IMR-90 (cell line): ENCODE measurements at regions of chr11 and their contacts with region 1.

Region 1: GRCh38 chr11:120511116-120511819 is at the start of gene GRIK4:
- DNase-seq: peak; percentile 57
- ATAC-seq: peak; percentile 94
- H3K4me3 ChIP-seq: peak within 1 kb of the TSS; percentile 47
- H3K27ac ChIP-seq: no peak within 1 kb of the TSS
- H3K4me1 ChIP-seq: peaks cover 2% of the 10 kb centered on the region; the same call in 1 of the 2 replicates
- H3K27me3 ChIP-seq: peaks cover 4% of the 10 kb centered on the region
- CTCF ChIP-seq: peak; percentile 97
- POLR2A ChIP-seq: no peak
- RAD21 ChIP-seq: peak; percentile 97
- total RNA-seq, gene GRIK4: under 0.01 and 0.18 TPM in 2 replicates

Region 2: GRCh38 chr11:120688163-120688562 is 176.9 kb after region 1 on chr11:
- CTCF ChIA-PET with region 1: interaction called, 22 read pairs
- POLR2A ChIA-PET with region 1: no interaction called
- dilution Hi-C with region 1: no loop called
- in situ Hi-C with region 1: loop called (anchors 5 kb)
- intact Hi-C with region 1: loop called (anchors 1 kb)
- DNase-seq: no peak
- ATAC-seq: no peak
- H3K4me3 ChIP-seq: no peak overlapping the region
- H3K27ac ChIP-seq: no peak overlapping the region
- H3K4me1 ChIP-seq: no peaks in the 10 kb centered on the region
- H3K27me3 ChIP-seq: peaks cover 36% of the 10 kb centered on the region
- CTCF ChIP-seq: no peak
- POLR2A ChIP-seq: no peak
- RAD21 ChIP-seq: no peak

Region 3: DNA sequence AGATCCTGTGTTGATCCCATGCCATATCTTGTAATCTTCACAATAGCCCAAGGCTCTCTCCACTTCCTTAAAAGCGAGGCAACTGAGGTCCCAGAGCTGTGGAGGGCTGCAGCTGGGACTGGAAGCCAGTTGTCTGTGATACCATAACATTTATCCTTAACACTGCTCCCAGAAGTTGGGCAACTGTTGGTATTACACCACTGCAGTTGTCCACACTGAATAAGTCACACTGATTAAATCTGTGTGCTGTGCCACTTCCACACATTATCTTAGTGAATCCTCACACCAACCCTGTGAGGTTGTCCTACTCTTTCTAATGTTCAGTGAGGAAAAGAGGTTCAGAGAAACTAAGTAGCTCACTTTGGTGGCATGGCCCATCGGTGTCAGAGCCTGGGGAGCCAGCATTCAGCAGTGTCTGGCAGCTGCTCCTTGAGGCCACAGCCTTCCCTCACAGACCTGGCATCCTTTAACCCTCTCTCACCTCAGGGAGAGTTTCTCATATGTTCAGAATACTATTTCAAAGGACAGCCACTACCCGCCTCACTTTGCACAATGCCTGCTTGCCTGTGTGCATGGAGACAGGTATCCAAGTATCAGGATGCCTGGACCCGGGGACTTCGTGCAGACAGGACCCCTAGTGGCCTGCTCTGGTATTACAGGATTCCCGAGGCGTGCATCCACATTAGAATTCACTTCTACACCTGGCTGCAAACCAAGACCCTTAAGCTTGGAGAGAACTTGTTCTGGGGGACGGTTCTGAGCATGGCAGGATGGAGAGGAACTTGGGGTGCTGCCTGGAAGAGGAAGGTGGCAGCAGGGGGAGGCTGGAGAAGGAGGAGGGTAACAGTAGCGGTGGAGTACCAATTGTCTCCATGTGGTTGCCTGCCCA is 290.8 kb after region 1 on chr11:
- CTCF ChIA-PET with region 1: interaction called, 7 read pairs
- POLR2A ChIA-PET with region 1: no interaction called
- dilution Hi-C with region 1: no loop called
- in situ Hi-C with region 1: loop called (anchors 5 kb)
- intact Hi-C with region 1: loop called (anchors 1 kb)
- DNase-seq: peak; percentile 50
- ATAC-seq: peak; percentile 97
- H3K4me3 ChIP-seq: no peak overlapping the region
- H3K27ac ChIP-seq: no peak overlapping the region
- H3K4me1 ChIP-seq: peaks cover under 1% of the 10 kb centered on the region; the same call in 1 of the 2 replicates
- H3K27me3 ChIP-seq: peaks cover 4% of the 10 kb centered on the region; the same call in 1 of the 2 replicates
- CTCF ChIP-seq: peak; percentile 72
- POLR2A ChIP-seq: no peak
- RAD21 ChIP-seq: peak; percentile 58

Region 4: GRCh38 chr11:120952461-120953434 is 441.5 kb after region 1 on chr11:
- CTCF ChIA-PET with region 1: interaction called, 4 read pairs
- POLR2A ChIA-PET with region 1: no interaction called
- dilution Hi-C with region 1: no loop called
- in situ Hi-C with region 1: loop called (anchors 5 kb)
- intact Hi-C with region 1: loop called (anchors 1 kb)
- DNase-seq: peak; percentile 64
- ATAC-seq: peak; percentile 100
- H3K4me3 ChIP-seq: no peak overlapping the region
- H3K27ac ChIP-seq: no peak overlapping the region
- H3K4me1 ChIP-seq: no peaks in the 10 kb centered on the region
- H3K27me3 ChIP-seq: peaks cover 8% of the 10 kb centered on the region
- CTCF ChIP-seq: peak; percentile 74
- POLR2A ChIP-seq: no peak
- RAD21 ChIP-seq: peak; percentile 81

Region 5: GRCh38 chr11:121194731-121195596 is 683.7 kb after region 1 on chr11:
- CTCF ChIA-PET with region 1: no interaction called
- POLR2A ChIA-PET with region 1: no interaction called
- dilution Hi-C with region 1: no loop called
- in situ Hi-C with region 1: no loop called
- intact Hi-C with region 1: loop called (anchors 1 kb)
- DNase-seq: peak; percentile 64
- ATAC-seq: peak; percentile 98
- H3K4me3 ChIP-seq: no peak overlapping the region
- H3K27ac ChIP-seq: no peak overlapping the region
- H3K4me1 ChIP-seq: no peaks in the 10 kb centered on the region
- H3K27me3 ChIP-seq: peaks cover 15% of the 10 kb centered on the region
- CTCF ChIP-seq: peak; percentile 74
- POLR2A ChIP-seq: no peak
- RAD21 ChIP-seq: peak; percentile 72